ENCODE measurements at regions of chr12 and their contacts with region 1.

Region 1: DNA sequence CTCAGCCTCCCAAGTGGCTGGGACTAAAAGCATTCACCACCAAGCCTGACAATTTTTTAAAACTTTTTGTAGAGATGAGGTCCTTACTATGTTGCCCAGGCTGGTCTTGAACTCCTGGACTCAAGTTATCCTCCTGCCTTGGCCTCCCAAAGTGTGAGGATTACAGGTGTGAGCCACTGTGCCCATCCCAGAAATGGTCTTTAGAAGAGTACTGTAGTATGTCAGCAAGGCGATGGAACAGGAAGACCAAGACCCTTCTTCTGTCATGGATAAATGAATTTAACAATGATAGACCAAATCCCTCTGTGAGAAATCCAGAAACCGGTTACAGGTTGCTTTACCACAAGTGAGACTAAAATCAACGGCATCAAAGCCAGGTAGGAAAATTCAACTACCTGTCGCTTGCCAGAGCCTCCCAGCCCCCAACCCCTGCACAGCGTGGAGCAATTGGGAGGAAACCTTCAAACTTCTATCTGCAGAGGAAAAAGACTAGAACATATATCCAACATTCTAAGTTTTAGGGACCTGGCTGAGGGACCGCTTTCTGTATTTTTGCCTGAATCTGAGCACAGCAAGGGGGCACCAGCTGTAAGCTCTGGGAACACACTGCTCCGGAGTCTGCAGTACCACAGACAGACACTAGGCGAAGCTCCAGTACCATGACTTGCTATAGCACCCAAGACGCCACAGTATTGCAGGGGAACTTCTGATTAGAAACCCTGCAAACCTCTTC is 51.3 kb downstream of the CPSF6 start:
- DNase-seq: peak; percentile 95
- H3K4me3 Mint-ChIP-seq: peak overlapping the region; percentile 5
- H3K27ac Mint-ChIP-seq: no peak overlapping the region
- H3K4me1 Mint-ChIP-seq: peaks cover 10% of the 10 kb centered on the region
- H3K27me3 Mint-ChIP-seq: peaks cover 5% of the 10 kb centered on the region

Region 2: GRCh38 chr12:69341328-69341727 is 50.6 kb after region 1 on chr12:
- CTCF ChIA-PET with region 1: interaction called, 12 read pairs
- intact Hi-C with region 1: no loop called
- DNase-seq: no peak
- H3K4me3 Mint-ChIP-seq: no peak overlapping the region
- H3K27ac Mint-ChIP-seq: no peak overlapping the region
- H3K4me1 Mint-ChIP-seq: no peaks in the 10 kb centered on the region
- H3K27me3 Mint-ChIP-seq: no peaks in the 10 kb centered on the region

Region 3: DNA sequence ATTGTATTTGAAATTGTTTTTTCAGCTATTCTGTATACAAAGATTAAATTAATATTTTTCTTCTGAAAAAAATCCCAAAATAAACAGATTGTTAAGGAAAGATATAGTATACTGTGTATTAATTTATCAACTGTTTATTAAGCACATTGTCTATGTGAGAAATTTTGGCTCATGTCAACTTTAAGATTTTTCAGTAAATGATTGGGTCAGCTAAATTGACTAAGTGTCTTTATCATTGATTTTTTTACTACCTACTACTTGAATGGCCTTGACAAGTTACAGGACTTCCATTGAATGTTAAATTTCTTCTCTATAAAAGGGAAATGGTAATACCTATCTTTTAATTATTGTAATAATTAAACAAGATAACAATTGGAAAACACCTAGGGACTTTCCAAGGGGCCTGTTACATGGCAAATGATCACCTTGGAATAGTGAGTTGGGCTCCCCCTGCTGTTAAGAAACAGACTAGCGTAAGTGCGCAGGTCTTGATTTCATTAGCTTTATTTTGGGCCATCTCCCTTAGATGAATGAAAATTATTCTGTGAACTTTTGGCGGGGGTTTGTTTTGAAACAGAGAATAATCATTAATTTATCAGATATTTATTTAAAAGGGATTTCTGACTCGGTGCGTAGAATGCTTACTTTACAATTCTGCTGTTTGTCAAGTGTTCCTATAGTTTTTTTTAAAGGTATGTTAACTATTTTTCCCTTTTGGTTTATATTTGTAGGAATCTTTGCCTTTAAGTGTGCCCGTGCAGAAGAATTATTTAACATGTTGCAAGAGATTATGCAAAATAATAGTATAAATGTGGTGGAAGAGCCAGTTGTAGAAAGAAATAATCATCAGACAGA is 280.1 kb after region 1 on chr12:
- CTCF ChIA-PET with region 1: interaction called, 4 read pairs
- intact Hi-C with region 1: loop called (anchors 1 kb)
- DNase-seq: peak; percentile 75
- H3K4me3 Mint-ChIP-seq: no peak overlapping the region
- H3K27ac Mint-ChIP-seq: no peak overlapping the region
- H3K4me1 Mint-ChIP-seq: peaks cover 11% of the 10 kb centered on the region
- H3K27me3 Mint-ChIP-seq: no peaks in the 10 kb centered on the region

Region 4: GRCh38 chr12:69639400-69640016 is 348.8 kb after region 1 on chr12:
- CTCF ChIA-PET with region 1: interaction called, 14 read pairs
- intact Hi-C with region 1: loop called (anchors 1 kb)
- DNase-seq: peak; percentile 74
- H3K4me3 Mint-ChIP-seq: no peak overlapping the region
- H3K27ac Mint-ChIP-seq: no peak overlapping the region
- H3K4me1 Mint-ChIP-seq: peaks cover 2% of the 10 kb centered on the region
- H3K27me3 Mint-ChIP-seq: no peaks in the 10 kb centered on the region

Region 5: GRCh38 chr12:70576346-70577282 is 1285.9 kb after region 1 on chr12:
- CTCF ChIA-PET with region 1: no interaction called
- intact Hi-C with region 1: loop called (anchors 2 kb)
- DNase-seq: no peak
- H3K4me3 Mint-ChIP-seq: no peak overlapping the region
- H3K27ac Mint-ChIP-seq: no peak overlapping the region
- H3K4me1 Mint-ChIP-seq: no peaks in the 10 kb centered on the region
- H3K27me3 Mint-ChIP-seq: peaks cover 7% of the 10 kb centered on the region

Measured in activated naive CD4-positive, alpha-beta T cell treated with anti-CD3 and anti-CD28 coated beads for 36 hours (primary cell).